Dorsolateral prefrontal cortex (tissue), 120 donors: ENCODE measurements at regions of chr3 and their contacts with region 1.

Region 1: DNA sequence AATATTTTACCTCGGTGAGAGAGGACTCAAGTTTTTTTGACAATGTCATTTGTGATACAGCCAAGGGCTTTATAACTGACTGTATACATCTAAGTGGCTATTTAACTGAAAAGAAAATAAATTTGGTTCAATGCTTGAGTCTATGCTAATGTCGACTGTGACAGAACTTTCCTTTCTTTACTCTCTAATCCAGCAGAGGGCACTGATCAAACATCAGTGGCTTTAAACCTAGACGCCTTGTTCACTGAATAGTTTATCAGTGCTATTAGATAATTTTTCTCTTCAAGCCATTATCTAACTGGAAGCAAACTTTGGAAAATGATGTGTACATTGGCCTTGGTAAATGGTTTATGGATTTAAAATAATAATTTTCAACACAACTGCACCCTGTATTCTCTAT is 285.1 kb downstream of the CHL1 start:
- DNase-seq: no peak
- H3K4me3 ChIP-seq: no peak overlapping the region
- H3K27ac ChIP-seq: no peak overlapping the region
- H3K27me3 ChIP-seq: no peaks in the 10 kb centered on the region
- CTCF ChIP-seq: peak in 45 of 56 donors; percentile 17 to 55 (median 40)

Region 2: DNA sequence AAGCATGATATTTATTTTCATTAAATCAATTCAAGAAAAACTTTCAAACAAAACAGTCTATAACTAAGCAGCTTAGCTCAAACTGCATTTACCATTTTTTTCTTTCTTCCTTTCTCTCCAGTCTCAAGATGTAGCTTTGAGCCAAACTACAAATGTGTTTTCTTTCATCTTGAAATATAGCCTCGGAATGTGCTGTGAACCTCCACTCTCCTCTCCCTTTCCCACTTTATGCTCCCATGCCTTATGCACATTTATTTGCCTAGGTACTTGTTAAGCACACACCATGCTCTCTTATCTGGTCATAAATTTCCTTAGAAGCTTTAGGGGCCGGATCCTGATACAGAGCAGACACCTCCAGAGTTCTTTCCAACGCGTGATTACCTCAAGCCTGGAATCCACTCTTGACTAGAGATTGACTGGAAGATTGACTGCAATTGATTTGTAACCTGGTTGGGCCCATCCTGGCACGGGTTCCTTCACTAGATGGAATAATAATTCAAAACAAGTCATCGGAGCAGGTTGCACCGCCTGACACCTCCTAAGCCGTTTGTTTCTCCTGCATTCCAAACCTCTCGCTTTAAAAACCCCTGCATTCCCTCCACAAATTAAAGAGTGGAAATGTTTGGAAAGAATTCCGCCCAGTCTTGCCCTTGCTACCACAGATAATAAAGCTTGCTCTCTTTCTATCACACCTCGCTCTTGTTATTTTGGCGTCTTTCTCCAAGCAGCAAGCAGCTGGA is 59.6 kb after region 1 on chr3:
- intact Hi-C with region 1: loop called in 1 of 2 experiments (anchors 2 kb)
- DNase-seq: no peak
- H3K4me3 ChIP-seq: no peak overlapping the region
- H3K27ac ChIP-seq: no peak overlapping the region
- H3K27me3 ChIP-seq: peaks cover 0 to 5% (median 0%) of the 10 kb centered on the region in 45 donors
- CTCF ChIP-seq: no peak